Ascending aorta (tissue), 2 donors: ENCODE measurements at regions of chr5 and their contacts with region 1.

Region 1: DNA sequence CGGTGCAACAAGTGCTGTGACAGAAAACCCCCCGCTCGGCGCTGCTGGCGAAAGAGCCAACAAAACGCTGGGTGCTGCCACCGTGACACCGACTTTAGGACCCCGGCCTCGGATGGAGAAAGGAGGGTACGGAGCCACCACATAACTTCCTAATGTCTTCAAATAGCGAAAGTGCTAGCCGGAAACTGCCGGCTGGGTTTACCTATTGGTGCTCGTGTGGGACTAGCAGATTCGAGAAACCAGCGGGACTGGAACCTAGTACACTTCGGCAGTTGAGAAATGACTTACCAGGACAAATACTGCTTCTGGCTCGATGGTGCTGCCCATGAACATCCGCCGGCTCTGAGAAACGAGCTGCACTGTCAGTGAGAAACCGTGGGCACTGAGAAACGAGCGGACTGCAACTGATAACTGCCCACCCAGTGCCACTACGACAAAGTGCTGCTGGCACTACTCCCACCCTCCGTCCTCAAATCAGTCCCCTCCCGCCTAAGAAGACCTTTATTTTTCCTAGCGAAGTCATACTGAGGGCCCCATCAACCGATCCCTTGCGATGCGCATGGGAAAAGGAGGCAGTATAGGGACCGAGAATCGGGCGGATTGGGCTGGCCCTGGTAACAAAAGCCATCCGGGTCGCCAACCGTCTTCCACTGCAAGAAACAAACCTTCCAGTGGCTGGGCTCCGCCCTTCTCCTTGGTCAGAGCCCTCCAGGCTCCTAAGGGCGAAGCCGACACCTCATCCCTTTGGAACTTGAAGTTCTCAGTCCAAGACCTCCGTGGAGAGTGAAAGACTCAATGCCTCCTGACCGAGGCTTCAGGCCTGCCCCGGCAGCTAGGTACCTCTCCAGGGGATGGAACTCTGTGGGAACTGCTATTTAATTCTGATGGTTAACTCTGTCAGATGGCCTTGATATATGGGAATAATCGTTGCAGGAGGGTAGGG is 27.0 kb upstream of the ANXA2R start:
- DNase-seq: peak; percentile 67 to 95
- H3K4me3 ChIP-seq: peak overlapping the region; percentile 87 to 90
- H3K27ac ChIP-seq: peak overlapping the region; percentile 99 to 100
- H3K4me1 ChIP-seq: peaks cover 0 to 26% of the 10 kb centered on the region in 2 donors
- H3K27me3 ChIP-seq: no peaks in the 10 kb centered on the region
- CTCF ChIP-seq: no peak

Region 2: DNA sequence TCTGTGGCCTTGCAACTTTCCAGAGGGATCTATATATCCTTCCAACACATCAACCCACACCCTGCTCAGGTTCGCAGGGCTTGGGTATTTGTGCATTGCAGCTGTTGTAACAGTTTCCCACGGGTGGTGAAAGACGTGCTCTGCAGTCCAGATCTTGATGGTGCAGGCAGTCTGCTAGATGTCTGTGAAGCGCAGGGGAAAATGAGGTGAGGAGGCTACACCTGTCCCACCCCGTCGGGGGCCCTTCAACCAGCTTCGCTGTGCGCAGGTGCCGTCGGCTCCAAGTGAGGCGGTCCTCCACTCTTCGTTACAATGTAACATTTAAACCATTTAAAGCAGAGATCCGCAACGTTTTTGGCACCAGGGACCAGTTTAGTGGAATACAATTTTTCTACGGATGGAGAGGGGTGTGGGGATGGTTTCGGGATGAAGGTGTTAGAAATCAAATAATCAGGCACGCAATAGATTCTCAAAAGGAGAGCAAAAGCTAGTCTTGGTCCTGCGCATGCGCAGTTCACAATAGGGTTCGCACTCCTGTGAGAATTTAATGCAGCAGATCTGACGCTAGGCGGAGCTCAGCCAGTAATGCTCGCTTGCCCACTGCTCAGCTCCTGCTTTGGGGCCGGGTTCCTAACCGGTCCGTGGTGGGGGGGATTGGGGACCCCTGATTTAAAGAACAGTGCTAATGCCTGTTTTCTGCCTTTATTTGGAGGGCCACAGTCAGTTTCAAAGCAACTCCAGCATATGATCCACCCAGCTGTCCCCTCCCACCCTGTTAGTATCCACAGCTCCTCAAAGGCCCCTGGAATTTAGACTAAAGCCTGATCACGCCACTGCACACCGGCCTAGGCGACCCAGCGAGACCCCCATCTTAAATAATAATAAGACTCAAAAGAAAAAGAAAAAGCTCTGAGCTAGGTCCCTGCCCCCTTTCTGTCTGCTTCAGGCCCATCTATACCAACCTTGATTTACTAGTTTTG is 158.3 kb before region 1 on chr5:
- intact Hi-C with region 1: loop called (anchors 2 kb)
- DNase-seq: peak; percentile 50 to 94
- H3K4me3 ChIP-seq: peak overlapping the region; percentile 49 to 63
- H3K27ac ChIP-seq: no peak overlapping the region
- H3K4me1 ChIP-seq: peaks cover 0 to 5% of the 10 kb centered on the region in 2 donors
- H3K27me3 ChIP-seq: no peaks in the 10 kb centered on the region
- CTCF ChIP-seq: peak; percentile 76 to 87 (median 78)

Region 3: GRCh38 chr5:42994246-42995151 is 72.6 kb before region 1 on chr5:
- intact Hi-C with region 1: loop called (anchors 1 kb)
- DNase-seq: peak in 1 of 2 donors; percentile 94
- H3K4me3 ChIP-seq: peak overlapping the region; percentile 52 to 72
- H3K27ac ChIP-seq: peak overlapping the region; percentile 90 to 97
- H3K4me1 ChIP-seq: peaks cover 0 to 4% of the 10 kb centered on the region in 2 donors
- H3K27me3 ChIP-seq: no peaks in the 10 kb centered on the region
- CTCF ChIP-seq: peak; percentile 84 to 88 (median 85)

Region 4: DNA sequence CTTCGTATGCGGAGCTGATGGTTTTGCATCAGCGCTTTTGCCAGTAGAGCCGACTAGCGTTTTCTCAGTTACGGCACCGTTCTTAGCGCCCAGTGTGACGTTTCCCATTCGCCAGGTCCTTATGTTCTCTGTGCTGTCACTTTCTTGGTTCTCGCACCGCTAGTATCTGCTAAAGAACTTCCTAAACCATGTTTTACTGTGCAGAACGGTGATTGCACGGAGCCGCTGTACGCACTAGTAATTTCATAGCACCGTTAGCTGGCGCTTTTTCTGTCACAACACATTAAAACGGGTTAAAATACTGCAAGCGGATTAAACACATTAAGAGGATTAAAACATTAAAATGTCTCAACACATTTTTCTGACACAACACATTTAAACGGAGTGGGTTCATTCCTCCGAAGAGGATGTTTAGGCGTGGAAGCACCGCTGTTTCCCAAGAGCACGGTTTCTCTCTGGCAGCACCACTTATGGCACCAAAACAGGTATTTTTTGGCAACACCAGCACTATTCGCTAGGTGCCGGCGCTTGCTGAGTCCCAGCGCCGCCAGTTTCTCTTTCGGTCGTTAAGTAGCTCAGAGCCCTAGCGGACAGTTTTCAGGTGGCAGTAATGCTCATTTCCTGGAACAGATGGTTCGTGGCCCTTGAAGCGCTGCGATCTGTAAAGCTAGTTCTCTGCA is 47.3 kb before region 1 on chr5:
- intact Hi-C with region 1: loop called (anchors 1 kb)
- DNase-seq: peak in 1 of 2 donors; percentile 83
- H3K4me3 ChIP-seq: peak overlapping the region; percentile 71 to 75
- H3K27ac ChIP-seq: peak overlapping the region; percentile 43 to 49
- H3K4me1 ChIP-seq: no peaks in the 10 kb centered on the region
- H3K27me3 ChIP-seq: no peaks in the 10 kb centered on the region
- CTCF ChIP-seq: peak in 2 of 3 experiments; percentile 19 to 34

Region 5: DNA sequence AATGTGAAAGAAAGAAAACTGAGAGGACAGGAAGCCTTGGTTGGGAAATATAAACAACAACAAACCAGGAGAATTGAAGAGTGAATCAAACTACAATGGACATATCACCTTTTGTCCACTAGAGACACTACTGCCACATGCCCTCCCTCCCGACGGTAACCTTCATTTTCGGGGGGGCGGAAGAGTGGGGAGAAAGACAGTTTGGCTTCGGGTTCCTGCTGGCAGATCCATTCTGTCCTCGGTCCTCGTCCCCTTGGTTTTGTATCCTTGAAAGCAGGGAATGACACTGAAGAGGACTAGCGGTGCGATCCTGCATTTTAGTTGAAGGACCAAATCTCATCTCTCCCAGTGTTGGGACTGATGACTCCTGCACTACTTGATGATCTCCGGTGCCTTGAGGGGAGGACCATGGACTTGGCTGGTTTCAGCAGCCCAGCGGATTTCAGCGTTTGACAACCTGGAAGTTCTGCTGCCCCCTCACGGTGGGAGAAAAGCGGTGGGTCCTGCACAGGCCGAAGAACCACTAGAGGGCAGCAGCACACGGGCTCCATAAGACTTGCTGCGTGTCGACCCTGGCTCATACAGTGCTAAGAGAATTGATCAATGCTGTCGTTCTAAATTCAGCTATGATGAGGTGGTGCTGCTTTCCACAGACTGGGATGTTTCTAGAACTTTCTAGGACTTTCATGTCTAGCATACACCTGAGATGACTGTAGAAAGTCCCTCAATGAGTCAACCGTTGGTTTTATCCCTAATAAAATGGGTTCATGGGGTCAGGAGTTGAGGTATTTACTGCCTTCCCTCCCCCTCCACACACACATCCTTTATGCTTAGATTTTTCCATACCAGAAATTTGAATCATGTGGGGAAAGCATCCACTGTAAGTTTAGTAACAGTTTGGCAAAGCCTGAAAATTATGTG is 38.6 kb after region 1 on chr5:
- intact Hi-C with region 1: loop called (anchors 2 kb)
- DNase-seq: peak; percentile 61 to 93
- H3K4me3 ChIP-seq: peak overlapping the region; percentile 46 to 54
- H3K27ac ChIP-seq: no peak overlapping the region
- H3K4me1 ChIP-seq: no peaks in the 10 kb centered on the region
- H3K27me3 ChIP-seq: no peaks in the 10 kb centered on the region
- CTCF ChIP-seq: peak; percentile 97 to 99 (median 97)

Region 6: GRCh38 chr5:43286623-43287022 is 219.6 kb after region 1 on chr5:
- intact Hi-C with region 1: no loop called
- DNase-seq: no peak
- H3K4me3 ChIP-seq: no peak overlapping the region
- H3K27ac ChIP-seq: no peak overlapping the region
- H3K4me1 ChIP-seq: no peaks in the 10 kb centered on the region
- H3K27me3 ChIP-seq: no peaks in the 10 kb centered on the region
- CTCF ChIP-seq: no peak

Region 7: DNA sequence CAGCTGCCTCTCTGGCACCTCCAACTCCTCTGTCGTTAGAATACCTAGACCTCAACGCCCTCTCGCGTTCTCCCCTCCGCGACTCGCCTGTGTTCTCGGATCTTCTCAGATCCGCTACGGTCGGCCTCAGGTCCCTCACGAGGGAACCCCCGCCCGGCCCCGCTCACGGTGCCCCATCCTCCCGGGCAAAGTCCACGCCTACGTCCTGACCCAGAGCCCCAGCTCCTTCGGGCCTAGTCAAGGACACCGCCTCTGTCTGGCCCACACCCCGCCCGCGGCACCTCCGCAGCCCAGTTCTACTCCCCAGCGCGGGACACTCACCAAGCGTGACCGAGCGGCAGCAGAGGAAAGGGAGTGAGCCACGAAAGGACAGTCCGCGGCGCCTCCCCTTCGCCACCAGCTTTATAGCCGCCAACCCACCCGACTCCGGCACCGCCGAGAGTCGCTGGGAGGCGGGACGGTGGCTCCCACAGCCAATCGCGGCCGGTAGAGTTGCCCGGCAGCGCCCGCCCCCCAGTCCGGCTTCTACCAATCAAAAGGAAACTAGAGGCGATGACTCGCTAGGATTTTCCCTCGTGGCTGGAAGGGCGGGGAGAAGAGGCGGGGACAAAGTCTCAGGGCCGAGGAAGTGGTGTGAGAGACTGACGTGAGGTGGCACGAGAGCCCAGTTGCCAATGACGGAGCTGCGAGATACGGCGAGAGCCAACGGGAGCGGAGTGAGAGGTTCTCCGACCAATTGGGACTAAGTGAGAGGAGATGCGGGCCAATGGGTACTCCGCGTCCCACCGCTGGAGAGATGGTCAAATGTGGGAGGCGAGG is 246.2 kb after region 1 on chr5 and contains the start of gene HMGCS1:
- intact Hi-C with region 1: loop called (anchors 1 kb)
- DNase-seq: peak; percentile 99 to 100
- H3K4me3 ChIP-seq: peak within 1 kb of the TSS; percentile 85 to 94
- H3K27ac ChIP-seq: peak within 1 kb of the TSS; percentile 92 to 93
- H3K4me1 ChIP-seq: peaks cover 0 to 8% of the 10 kb centered on the region in 2 donors
- H3K27me3 ChIP-seq: no peaks in the 10 kb centered on the region
- CTCF ChIP-seq: no peak
- total RNA-seq, gene HMGCS1: 36.5 TPM